ENCODE measurements at regions of chr17 and their contacts with region 1.

Region 1: GRCh38 chr17:19327039-19327776 is 35.3 kb downstream of the B9D1 start:
- DNase-seq: no peak
- ATAC-seq: no peak
- H3K4me3 ChIP-seq: no peak overlapping the region
- H3K27ac ChIP-seq: no peak overlapping the region
- H3K4me1 ChIP-seq: no peaks in the 10 kb centered on the region
- H3K27me3 ChIP-seq: no peaks in the 10 kb centered on the region

Region 2: GRCh38 chr17:19384701-19385411 is 57.6 kb after region 1 on chr17:
- intact Hi-C with region 1: loop called in 1 of 4 experiments (anchors 10 kb)
- DNase-seq: peak; percentile 92 to 98 (median 96)
- ATAC-seq: peak; percentile 68 to 69
- H3K4me3 ChIP-seq: no peak overlapping the region
- H3K27ac ChIP-seq: peak overlapping the region; percentile 73
- H3K4me1 ChIP-seq: peaks cover 23% of the 10 kb centered on the region
- H3K27me3 ChIP-seq: no peaks in the 10 kb centered on the region